ENCODE measurements at regions of chr5 and their contacts with region 1.

Region 1: DNA sequence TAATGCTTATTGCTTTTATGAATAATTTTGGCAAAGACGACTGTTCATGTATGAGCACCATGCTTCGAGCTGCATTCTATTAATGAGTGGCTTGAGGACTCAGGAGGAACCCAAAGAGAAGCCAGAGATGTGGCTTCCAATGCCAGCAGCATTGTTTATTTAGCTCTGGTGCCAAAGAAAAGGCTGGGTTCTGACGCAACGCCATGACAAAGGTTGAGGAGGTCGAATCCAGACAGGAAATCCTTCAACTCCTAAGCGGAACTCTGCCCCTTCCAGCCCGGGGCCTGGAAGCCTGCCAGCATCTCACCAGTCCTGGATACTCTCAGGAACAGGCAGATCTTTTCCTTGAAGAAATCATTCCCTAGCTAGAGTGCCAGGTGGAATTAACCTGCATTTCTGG is 104.4 kb downstream of the ARHGAP26 start:
- ATAC-seq: no peak
- H3K4me3 ChIP-seq: no peak overlapping the region
- H3K27ac ChIP-seq: no peak overlapping the region
- H3K4me1 ChIP-seq: no peaks in the 10 kb centered on the region

Region 2: DNA sequence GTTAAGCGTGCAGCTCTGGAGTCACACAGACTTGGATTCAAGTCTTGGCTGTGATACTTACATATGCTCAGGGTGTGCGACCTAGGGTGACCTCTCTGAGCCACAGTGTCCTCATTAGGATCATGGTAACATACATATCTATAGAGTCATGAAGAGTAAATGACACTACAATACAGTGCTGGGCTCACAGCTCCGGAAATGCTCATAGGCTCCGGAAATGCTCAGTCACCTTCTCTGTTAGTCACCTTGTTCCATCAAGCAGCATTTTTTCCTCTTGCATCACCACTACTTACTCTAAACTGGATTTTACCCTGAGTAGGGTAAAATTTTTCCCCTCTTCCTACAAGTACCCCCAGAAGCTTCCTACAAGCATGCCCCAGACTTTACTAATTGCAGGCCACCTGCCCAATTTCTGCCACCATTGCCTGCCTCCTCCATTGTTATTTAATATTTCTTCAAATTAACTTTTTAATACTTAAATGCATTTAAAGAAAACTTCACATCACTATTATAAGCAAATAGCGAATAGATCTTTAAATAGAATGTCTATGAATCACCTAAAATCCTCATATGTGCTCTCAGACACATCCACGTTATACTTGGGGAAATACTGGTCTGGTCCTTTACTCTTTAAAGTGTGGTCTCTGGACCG is 402.1 kb before region 1 on chr5:
- in situ Hi-C with region 1: no loop called
- ATAC-seq: peak in 3 of 8 experiments; percentile 26 to 70 (median 64)
- H3K4me3 ChIP-seq: no peak overlapping the region
- H3K27ac ChIP-seq: no peak overlapping the region
- H3K4me1 ChIP-seq: peaks cover 6% of the 10 kb centered on the region in 2 donors

Region 3: DNA sequence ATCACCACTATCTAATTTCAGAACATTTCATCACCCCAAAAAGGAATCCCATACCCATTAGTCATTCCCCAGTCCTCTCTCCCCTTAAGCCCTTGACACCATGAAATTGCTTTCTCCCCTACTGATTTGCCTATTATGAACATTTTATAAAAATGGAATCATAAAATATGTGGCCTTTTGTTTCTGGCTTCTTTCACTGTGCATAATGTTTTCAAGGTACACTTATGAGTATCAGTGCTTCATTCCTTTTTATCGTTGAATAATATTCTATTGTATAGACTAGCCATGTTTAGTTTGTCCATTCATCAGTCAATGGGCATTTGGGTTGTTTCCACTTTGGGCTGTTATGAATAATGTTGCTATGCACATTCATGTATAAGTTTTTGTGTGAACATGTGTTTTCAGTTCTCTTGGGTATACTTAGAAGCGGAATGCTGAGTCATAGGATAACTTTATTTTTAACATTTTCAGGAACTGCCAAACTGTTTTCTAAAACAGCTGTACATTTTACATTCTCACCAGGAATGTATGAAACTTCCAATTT is 148.3 kb before region 1 on chr5:
- in situ Hi-C with region 1: loop called in 7 of 9 experiments (anchors 10 to 25 kb)
- ATAC-seq: peak in 6 of 8 experiments; percentile 52 to 96 (median 79)
- H3K4me3 ChIP-seq: no peak overlapping the region
- H3K27ac ChIP-seq: no peak overlapping the region
- H3K4me1 ChIP-seq: peaks cover 0 to 4% of the 10 kb centered on the region in 2 donors

Region 4: GRCh38 chr5:142769741-142770631 is 104.6 kb before region 1 on chr5 and contains the start of gene ARHGAP26:
- in situ Hi-C with region 1: loop called in 1 of 9 experiments (anchors 10 kb)
- ATAC-seq: peak; percentile 88 to 96 (median 94)
- H3K4me3 ChIP-seq: peak within 1 kb of the TSS; percentile 73 to 91 (median 81)
- H3K27ac ChIP-seq: peak within 1 kb of the TSS; percentile 57 to 65
- H3K4me1 ChIP-seq: peaks cover 8 to 14% of the 10 kb centered on the region in 2 donors
- total RNA-seq, gene ARHGAP26: 1.3 to 14.2 (median 7.0) TPM

Region 5: DNA sequence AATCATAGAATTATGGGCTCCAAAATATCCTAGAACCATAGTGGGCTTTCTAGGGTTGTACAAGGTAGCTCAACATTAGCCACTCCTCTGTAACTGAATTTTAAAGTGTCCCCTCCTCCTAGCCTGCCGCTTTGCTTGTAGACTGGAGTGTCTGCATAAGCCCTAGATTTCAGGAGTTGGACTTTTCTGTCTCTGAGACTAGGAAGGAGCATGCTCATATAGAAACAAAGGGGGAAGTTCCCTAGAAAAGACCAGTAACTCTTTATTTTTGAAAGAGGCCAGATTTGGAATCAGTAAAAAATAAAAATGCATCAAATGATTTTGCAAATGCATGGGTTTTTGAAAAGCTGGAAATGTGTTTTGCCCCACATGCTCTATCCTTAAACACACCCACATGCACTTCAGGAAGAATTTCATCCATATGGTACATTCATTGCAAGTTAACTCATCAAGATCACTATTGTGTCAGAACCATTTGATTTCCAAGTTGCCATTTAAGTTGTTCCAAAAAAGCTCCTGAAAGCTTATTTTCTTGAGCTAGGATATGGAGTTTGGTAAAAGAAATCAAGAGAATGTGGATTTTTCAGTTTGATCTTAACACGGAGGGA is 649.9 kb after region 1 on chr5:
- in situ Hi-C with region 1: no loop called
- ATAC-seq: peak in 2 of 8 experiments; percentile 36
- H3K4me3 ChIP-seq: no peak overlapping the region
- H3K27ac ChIP-seq: no peak overlapping the region
- H3K4me1 ChIP-seq: peaks cover 0 to 9% of the 10 kb centered on the region in 2 donors

Measured in motor neuron (in vitro differentiated cells).